Pancreas (tissue), 10 donors: ENCODE measurements at regions of chr18 and their contacts with region 1.

Region 1: DNA sequence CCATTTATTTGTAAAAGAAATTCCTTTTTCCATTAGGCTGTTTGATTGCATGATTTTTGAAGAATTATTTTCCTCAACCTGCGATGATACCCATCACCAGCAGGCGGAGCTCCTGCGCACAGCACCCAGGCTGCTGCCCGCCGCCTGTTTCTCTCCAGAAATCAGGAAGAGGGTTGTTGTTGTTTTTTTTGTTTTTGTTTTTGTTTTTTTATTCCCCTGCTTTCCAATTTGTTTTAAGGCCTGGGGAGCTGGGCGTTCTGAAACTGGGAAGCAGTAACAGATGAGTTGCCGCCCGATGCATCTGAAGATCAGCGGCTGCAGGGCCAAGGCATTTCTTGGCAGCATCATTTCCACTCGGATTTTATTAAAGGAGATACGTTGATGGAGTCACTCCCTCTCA is 132.1 kb downstream of the MBP start:
- DNase-seq: peak in 2 of 6 donors; percentile 57 to 84
- ATAC-seq: peak; percentile 66 to 89 (median 81)
- H3K4me3 ChIP-seq: no peak overlapping the region
- H3K27ac ChIP-seq: no peak overlapping the region
- H3K4me1 ChIP-seq: no peaks in the 10 kb centered on the region
- H3K27me3 ChIP-seq: no peaks in the 10 kb centered on the region
- CTCF ChIP-seq: peak; percentile 80 to 90 (median 87)

Region 2: DNA sequence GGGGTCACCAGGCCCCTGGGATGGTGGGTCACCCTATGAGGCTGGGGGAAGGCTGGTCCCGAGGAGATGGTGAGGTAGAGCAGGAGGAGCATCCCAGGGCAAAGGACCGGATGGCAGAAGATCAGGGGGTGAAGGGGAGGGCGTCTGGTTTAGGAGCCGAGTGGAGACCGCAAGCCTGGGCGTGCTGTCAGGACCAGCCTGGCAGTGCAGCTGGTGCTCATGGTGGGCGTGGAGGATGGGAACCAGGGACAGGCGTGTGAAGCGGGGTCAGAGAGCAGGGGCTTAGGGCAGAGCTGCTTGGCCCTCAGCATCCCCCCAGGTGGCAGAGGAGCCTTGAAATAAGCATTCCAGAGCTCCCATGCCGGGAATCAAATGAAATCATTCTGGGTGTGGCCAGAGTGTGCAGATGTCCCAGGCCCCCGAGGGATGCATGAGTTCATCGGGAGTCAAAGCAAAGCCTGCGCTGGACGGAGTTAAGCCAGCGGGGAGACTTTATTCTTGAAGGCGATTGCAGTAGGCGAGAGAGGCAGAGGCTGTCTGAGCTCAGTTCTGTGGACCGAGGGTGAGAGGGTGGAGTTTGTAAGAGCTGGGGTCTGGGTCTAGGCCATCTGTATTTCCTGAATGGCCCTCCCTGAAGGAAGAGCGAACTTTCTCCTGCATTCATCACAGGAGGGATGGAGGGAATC is 165.1 kb after region 1 on chr18:
- intact Hi-C with region 1: no loop called
- DNase-seq: no peak
- ATAC-seq: peak in 3 of 4 donors; percentile 21 to 53 (median 33)
- H3K4me3 ChIP-seq: no peak overlapping the region
- H3K27ac ChIP-seq: no peak overlapping the region
- H3K4me1 ChIP-seq: no peaks in the 10 kb centered on the region
- H3K27me3 ChIP-seq: no peaks in the 10 kb centered on the region
- CTCF ChIP-seq: no peak

Region 3: DNA sequence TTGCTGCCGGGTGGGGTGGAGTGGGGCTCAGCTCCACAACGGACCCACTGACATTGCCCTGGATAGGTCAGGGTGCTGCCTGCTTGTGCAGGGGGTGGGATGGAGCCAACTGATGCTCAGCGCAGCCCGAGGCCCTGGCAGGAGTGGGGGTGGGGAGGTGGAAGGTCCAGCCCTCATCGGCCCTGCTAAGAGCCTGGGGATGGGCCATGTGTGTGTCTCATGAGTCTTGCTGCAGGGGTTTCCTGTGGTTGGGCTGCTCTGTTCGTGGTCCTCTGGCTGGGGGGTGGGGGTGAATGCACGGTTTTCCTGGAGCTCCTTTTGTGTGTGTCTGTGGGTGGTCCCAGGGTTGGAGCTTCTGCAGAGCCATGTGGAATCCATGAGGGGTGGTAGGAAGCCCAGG is 209.7 kb after region 1 on chr18:
- intact Hi-C with region 1: loop called in 2 of 3 experiments (anchors 5 to 10 kb)
- DNase-seq: no peak
- ATAC-seq: no peak
- H3K4me3 ChIP-seq: no peak overlapping the region
- H3K27ac ChIP-seq: no peak overlapping the region
- H3K4me1 ChIP-seq: peaks cover 0 to 6% (median 0%) of the 10 kb centered on the region in 3 donors
- H3K27me3 ChIP-seq: no peaks in the 10 kb centered on the region
- CTCF ChIP-seq: no peak

Region 4: DNA sequence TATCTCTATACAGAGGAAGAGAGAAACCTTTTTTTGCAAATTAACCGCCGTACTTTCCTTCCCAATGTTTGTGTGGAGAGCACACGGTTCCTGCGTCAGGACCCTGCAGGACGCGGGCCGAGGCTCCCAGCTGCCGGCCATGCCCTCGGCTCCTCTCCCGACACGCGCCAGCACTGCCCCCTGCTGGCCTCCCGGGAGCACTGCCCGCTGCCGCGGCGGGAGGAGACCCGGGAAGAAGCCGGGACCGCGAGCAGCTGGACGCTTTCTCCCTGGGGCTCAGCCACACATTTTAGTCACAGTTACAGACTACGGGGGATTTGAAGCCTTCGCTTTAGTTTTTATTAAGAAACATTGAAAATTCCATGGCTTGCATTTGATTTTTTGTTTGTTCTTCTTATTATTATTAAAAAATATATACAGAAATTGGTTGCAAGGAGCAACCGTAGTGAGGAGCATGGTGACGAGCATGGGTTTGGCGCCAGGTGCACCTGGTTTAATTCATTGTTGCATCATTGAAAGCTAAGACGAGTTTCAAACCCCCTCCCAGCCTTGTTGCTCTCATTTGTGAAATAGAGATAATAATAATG is 650.4 kb after region 1 on chr18:
- intact Hi-C with region 1: loop called in 1 of 3 experiments (anchors 10 kb)
- DNase-seq: peak; percentile 55 to 95 (median 82)
- ATAC-seq: peak; percentile 97 to 100 (median 99)
- H3K4me3 ChIP-seq: no peak overlapping the region
- H3K27ac ChIP-seq: no peak overlapping the region
- H3K4me1 ChIP-seq: peaks cover 0 to 3% (median 0%) of the 10 kb centered on the region in 3 donors
- H3K27me3 ChIP-seq: peaks cover 0 to 6% (median 0%) of the 10 kb centered on the region in 4 donors
- CTCF ChIP-seq: peak; percentile 94 to 98 (median 96)